K562 (cell line): ENCODE measurements at regions of chr6 and their contacts with region 1.

Region 1: GRCh38 chr6:149834513-149835481 is 29.4 kb downstream of the LRP11 start:
- DNase-seq: peak; percentile 65 to 76 (median 67)
- ATAC-seq: peak; percentile 86
- H3K4me3 ChIP-seq: no peak overlapping the region
- H3K27ac ChIP-seq: no peak overlapping the region
- H3K4me1 ChIP-seq: no peaks in the 10 kb centered on the region
- H3K27me3 ChIP-seq: peaks cover 6 to 31% of the 10 kb centered on the region in 2 experiments
- CTCF ChIP-seq: peak; percentile 90 to 98 (median 93)
- EP300 ChIP-seq: no peak
- POLR2A ChIP-seq: no peak
- RAD21 ChIP-seq: peak; percentile 89 to 92

Region 2: GRCh38 chr6:149925974-149926777 is 91.4 kb after region 1 on chr6:
- CTCF ChIA-PET with region 1: interaction called, 23 read pairs
- POLR2A ChIA-PET with region 1: no interaction called
- in situ Hi-C with region 1: no loop called
- intact Hi-C with region 1: loop called (anchors 1 kb)
- DNase-seq: peak; percentile 75 to 91 (median 82)
- ATAC-seq: peak; percentile 97
- H3K4me3 ChIP-seq: peak overlapping the region; percentile 30
- H3K27ac ChIP-seq: no peak overlapping the region
- H3K4me1 ChIP-seq: peaks cover 0 to 26% of the 10 kb centered on the region in 2 experiments; a peak in 3 of 5 replicates
- H3K27me3 ChIP-seq: peaks cover 21 to 52% of the 10 kb centered on the region in 2 experiments
- CTCF ChIP-seq: peak; percentile 93 to 96 (median 95)
- EP300 ChIP-seq: 0 out of 2 replicates have a peak, but pooled peaks have one; percentile 20
- POLR2A ChIP-seq: no peak
- RAD21 ChIP-seq: peak; percentile 94 to 98